HEK293T (cell line): ENCODE measurements at regions of chr17 and their contacts with region 1.

Region 1: DNA sequence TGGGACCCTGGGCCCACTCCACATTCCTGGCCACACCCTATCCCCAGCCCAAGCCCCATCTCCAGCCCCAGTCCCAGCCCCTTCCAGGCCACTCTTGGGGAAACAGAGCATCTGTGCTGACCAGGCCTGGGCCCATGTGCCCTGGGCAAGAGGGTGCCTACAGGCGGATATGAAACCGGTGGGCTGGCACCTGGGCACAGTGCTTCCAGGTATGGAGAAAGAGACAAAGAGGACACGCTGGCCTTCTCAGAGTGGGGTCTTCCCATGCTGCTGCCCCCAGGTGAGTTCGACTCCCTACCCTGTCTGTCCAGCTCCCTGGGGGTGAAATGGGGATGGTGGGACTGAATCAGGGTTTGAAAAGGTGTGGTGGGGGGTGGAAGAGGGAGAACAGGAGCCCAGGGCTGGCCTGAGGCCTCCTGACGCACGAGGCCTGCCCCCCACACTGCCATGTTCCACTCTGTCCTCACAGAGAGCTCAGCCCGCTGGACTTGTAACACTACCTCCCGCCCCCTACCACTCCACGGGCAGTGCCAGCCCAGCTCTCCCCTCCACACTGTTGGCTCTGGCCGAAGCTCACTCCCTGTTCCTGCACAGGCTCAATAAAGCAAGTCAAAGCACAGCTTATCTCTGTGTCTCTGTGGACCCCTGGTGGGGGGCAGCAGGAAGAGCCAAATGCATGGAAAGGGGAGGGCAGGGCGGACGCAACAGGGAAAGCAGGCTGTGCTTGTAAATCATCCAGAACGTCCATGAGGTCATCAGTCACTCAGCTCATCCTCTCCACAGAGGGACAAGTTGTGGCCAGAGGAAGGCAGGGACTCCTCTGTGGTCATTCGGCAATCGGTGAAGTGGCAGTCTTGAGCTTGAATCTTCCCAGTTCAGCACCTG is 71.1 kb upstream of the TMEM97 start:
- DNase-seq: no peak

Region 2: GRCh38 chr17:28228126-28228857 is 19.6 kb before region 1 on chr17:
- CTCF ChIA-PET with region 1: interaction called, 10 read pairs
- POLR2A ChIA-PET with region 1: no interaction called
- DNase-seq: peak; percentile 25

Region 3: GRCh38 chr17:28357061-28357900 is 109.4 kb after region 1 on chr17 and contains the start of gene POLDIP2:
- CTCF ChIA-PET with region 1: no interaction called
- POLR2A ChIA-PET with region 1: no interaction called
- DNase-seq: peak; percentile 92